ENCODE measurements at regions of chr6 and their contacts with region 1.

Region 1: GRCh38 chr6:137313928-137314855 is 95.0 kb upstream of the IFNGR1 start:
- DNase-seq: peak; percentile 79 to 89
- ATAC-seq: peak; percentile 94
- H3K4me3 ChIP-seq: no peak overlapping the region
- H3K27ac ChIP-seq: no peak overlapping the region
- H3K4me1 ChIP-seq: no peaks in the 10 kb centered on the region
- H3K27me3 ChIP-seq: no peaks in the 10 kb centered on the region

Region 2: GRCh38 chr6:137094411-137095008 is 219.7 kb before region 1 on chr6:
- intact Hi-C with region 1: loop called (anchors 5 kb)
- DNase-seq: peak in 1 of 2 donors; percentile 53
- ATAC-seq: peak; percentile 72
- H3K4me3 ChIP-seq: no peak overlapping the region
- H3K27ac ChIP-seq: no peak overlapping the region
- H3K4me1 ChIP-seq: no peaks in the 10 kb centered on the region
- H3K27me3 ChIP-seq: no peaks in the 10 kb centered on the region

Region 3: GRCh38 chr6:137271245-137272183 is 42.7 kb before region 1 on chr6:
- intact Hi-C with region 1: loop called (anchors 5 kb)
- DNase-seq: no peak
- ATAC-seq: peak; percentile 82
- H3K4me3 ChIP-seq: no peak overlapping the region
- H3K27ac ChIP-seq: no peak overlapping the region
- H3K4me1 ChIP-seq: no peaks in the 10 kb centered on the region
- H3K27me3 ChIP-seq: no peaks in the 10 kb centered on the region

Measured in aorta (tissue), 5 donors.